Pancreas (tissue), 10 donors: ENCODE measurements at regions of chr16 and their contacts with region 1.

Region 1: GRCh38 chr16:78235168-78235800 is 135.8 kb downstream of the WWOX start:
- DNase-seq: peak; percentile 33 to 85 (median 68)
- ATAC-seq: peak; percentile 58 to 95 (median 91)
- H3K4me3 ChIP-seq: no peak overlapping the region
- H3K27ac ChIP-seq: no peak overlapping the region
- H3K4me1 ChIP-seq: peaks cover 0 to 7% (median 0%) of the 10 kb centered on the region in 3 donors
- H3K27me3 ChIP-seq: no peaks in the 10 kb centered on the region
- CTCF ChIP-seq: peak; percentile 77 to 90 (median 80)

Region 2: GRCh38 chr16:78122774-78123315 is 112.4 kb before region 1 on chr16:
- intact Hi-C with region 1: loop called in 2 of 3 experiments (anchors 10 kb)
- DNase-seq: peak in 1 of 6 donors; percentile 30
- ATAC-seq: peak; percentile 86 to 93 (median 89)
- H3K4me3 ChIP-seq: no peak overlapping the region
- H3K27ac ChIP-seq: peak overlapping the region in 1 of 4 donors; percentile 16
- H3K4me1 ChIP-seq: peaks cover 0 to 2% (median 0%) of the 10 kb centered on the region in 3 donors
- H3K27me3 ChIP-seq: no peaks in the 10 kb centered on the region
- CTCF ChIP-seq: peak in 3 of 4 donors; percentile 18 to 33 (median 29)